ENCODE measurements at regions of chrX and their contacts with region 1.

Region 1: GRCh38 chrX:129606918-129607317 is 47.8 kb downstream of the APLN start:
- DNase-seq: peak; percentile 48 to 55
- H3K4me3 ChIP-seq: no peak overlapping the region
- H3K27ac ChIP-seq: no peak overlapping the region
- H3K4me1 ChIP-seq: peaks cover 6% of the 10 kb centered on the region; the same call in 1 of the 2 replicates
- H3K27me3 ChIP-seq: no peaks in the 10 kb centered on the region
- CTCF ChIP-seq: peak; percentile 89

Region 2: DNA sequence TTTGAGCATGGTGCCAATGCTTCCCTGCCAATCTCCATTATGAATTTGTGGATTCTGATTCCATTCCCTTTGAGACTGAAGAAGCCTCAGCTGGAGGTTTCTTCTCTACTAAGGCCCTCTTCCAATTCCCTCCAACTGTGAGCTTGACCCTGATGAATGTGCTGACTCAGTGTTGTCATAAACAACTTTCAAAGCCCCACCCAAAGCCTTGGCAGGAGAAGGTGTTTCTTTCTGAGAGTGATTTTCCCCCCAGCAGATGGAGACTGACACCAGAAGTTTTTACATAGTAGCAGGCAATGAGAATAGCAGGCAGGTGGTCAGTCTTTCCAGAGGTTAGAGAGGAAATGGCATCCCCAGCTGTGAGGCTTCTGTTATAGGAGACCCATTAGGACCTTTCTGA is 13.8 kb before region 1 on chrX:
- CTCF ChIA-PET with region 1: interaction called, 7 read pairs
- POLR2A ChIA-PET with region 1: interaction called, 12 read pairs
- intact Hi-C with region 1: no loop called
- DNase-seq: peak; percentile 35 to 46
- H3K4me3 ChIP-seq: no peak overlapping the region
- H3K27ac ChIP-seq: peak overlapping the region; percentile 35
- H3K4me1 ChIP-seq: peaks cover 19% of the 10 kb centered on the region
- H3K27me3 ChIP-seq: no peaks in the 10 kb centered on the region
- CTCF ChIP-seq: no peak

Region 3: GRCh38 chrX:129642641-129643040 is 35.7 kb after region 1 on chrX:
- CTCF ChIA-PET with region 1: interaction called, 10 read pairs
- POLR2A ChIA-PET with region 1: no interaction called
- intact Hi-C with region 1: loop called (anchors 1 kb)
- DNase-seq: peak in 1 of 2 experiments; percentile 58
- H3K4me3 ChIP-seq: no peak overlapping the region
- H3K27ac ChIP-seq: no peak overlapping the region
- H3K4me1 ChIP-seq: 0 out of 2 replicates have a peak, but pooled peaks cover 6% of the 10 kb centered on the region
- H3K27me3 ChIP-seq: no peaks in the 10 kb centered on the region
- CTCF ChIP-seq: no peak

Region 4: DNA sequence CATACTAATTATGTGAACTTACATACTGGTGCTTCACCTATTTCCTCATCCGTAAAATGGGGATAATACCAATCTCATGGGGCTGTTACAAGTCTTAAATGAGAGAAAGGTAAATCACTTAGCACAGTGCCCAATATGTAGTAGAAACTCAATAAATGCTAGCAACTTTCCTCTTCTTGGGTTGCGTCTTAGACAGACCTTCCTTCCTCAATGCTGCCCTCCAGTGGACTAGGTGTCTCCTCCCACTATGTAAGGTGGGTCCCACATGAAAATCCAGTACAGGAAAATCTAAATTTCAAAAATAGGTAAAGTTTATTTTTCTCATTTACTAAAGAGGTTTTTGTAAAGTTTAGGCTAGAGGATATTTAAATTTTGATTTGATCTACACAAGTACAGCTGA is 216.2 kb after region 1 on chrX:
- CTCF ChIA-PET with region 1: interaction called, 3 read pairs
- POLR2A ChIA-PET with region 1: no interaction called
- intact Hi-C with region 1: loop called (anchors 1 kb)
- DNase-seq: peak in 1 of 2 experiments; percentile 18
- H3K4me3 ChIP-seq: no peak overlapping the region
- H3K27ac ChIP-seq: no peak overlapping the region
- H3K4me1 ChIP-seq: no peaks in the 10 kb centered on the region
- H3K27me3 ChIP-seq: no peaks in the 10 kb centered on the region
- CTCF ChIP-seq: peak; percentile 68

Region 5: DNA sequence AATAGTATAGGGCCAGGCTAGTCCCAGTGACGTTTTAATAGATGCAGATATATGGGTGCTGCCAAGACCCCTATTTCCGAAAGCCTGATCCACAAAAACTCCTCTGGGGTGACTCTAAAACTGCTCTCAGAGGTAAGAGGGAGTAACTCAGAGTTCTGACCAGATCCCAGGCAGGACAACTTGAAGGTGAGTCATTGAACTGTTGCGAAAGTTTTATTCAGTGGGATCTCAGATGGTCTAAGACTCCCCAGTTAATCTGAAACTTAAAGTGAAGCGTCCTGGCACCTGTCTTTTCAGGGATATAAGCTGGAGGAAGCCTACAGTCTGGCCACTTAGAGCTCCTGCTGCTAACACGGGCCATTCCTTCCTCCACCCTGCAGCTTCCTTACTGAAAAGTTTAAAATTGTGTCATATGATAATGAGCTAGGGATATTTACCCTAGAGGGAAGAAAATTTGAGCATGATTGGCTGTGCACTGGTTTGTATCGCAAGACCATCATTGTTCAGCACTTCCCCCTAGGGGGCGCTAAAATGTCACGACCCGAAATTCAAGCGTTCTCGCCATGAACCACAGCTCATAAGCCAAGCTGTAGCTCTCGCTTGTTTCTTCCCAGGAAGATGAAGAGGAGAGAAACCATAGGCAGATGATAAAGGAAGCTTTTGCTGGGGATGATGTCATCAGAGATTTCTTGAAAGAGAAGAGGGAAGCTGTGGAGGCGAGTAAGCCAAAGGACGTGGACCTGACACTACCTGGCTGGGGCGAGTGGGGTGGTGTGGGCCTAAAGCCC is 318.6 kb after region 1 on chrX:
- CTCF ChIA-PET with region 1: no interaction called
- POLR2A ChIA-PET with region 1: no interaction called
- intact Hi-C with region 1: loop called (anchors 10 kb)
- DNase-seq: peak; percentile 63 to 64
- H3K4me3 ChIP-seq: no peak overlapping the region
- H3K27ac ChIP-seq: peak overlapping the region; percentile 27
- H3K4me1 ChIP-seq: peaks cover 10% of the 10 kb centered on the region
- H3K27me3 ChIP-seq: no peaks in the 10 kb centered on the region
- CTCF ChIP-seq: peak; percentile 83

Region 6: GRCh38 chrX:130060122-130061069 is 453.5 kb after region 1 on chrX:
- CTCF ChIA-PET with region 1: interaction called, 4 read pairs
- POLR2A ChIA-PET with region 1: no interaction called
- intact Hi-C with region 1: loop called (anchors 1 kb)
- DNase-seq: peak; percentile 64 to 93
- H3K4me3 ChIP-seq: peak overlapping the region; percentile 66
- H3K27ac ChIP-seq: no peak overlapping the region
- H3K4me1 ChIP-seq: no peaks in the 10 kb centered on the region
- H3K27me3 ChIP-seq: no peaks in the 10 kb centered on the region
- CTCF ChIP-seq: peak; percentile 93

Region 7: DNA sequence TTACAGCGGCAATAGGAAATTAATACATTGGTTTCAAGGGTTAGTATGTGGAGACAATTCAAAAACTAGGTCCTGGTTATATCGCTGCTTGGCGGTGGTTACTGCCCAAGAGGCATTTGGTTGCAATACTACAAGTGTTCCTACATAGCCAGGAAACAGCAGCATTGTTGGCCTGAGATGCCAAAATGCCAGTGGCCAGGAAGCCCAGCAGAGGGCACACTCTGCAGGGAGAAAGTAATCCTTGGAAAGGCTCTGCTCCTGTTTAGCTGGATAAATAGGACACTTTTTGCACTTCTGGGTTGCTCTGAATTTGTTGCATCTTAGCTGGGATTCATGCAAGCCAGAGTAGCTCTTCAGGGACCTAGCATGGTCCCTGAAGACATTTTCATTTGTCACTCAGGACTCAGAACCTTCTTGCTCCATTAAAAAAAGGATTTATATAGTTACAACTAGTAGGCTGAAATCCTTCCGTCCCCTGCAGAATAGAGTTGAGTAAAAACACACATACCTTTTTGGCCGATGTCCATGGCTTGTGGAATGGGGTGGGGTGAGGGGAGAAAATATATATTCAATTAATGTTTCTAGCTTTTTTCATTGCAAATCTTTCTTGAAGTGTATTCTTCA is 786.6 kb after region 1 on chrX:
- CTCF ChIA-PET with region 1: no interaction called
- POLR2A ChIA-PET with region 1: no interaction called
- intact Hi-C with region 1: loop called (anchors 10 kb)
- DNase-seq: peak; percentile 52 to 61
- H3K4me3 ChIP-seq: no peak overlapping the region
- H3K27ac ChIP-seq: no peak overlapping the region
- H3K4me1 ChIP-seq: no peaks in the 10 kb centered on the region
- H3K27me3 ChIP-seq: peaks cover 24% of the 10 kb centered on the region
- CTCF ChIP-seq: peak; percentile 76

Measured in PC-9 (cell line).